ENCODE measurements at regions of chr19 and their contacts with region 1.

Region 1: GRCh38 chr19:51393959-51394836 is 3.8 kb upstream of the C19orf84 start:
- DNase-seq: peak; percentile 98
- H3K4me3 Mint-ChIP-seq: peak overlapping the region; percentile 86
- H3K27ac Mint-ChIP-seq: peak overlapping the region; percentile 98
- H3K4me1 Mint-ChIP-seq: peaks cover 54% of the 10 kb centered on the region
- H3K27me3 Mint-ChIP-seq: no peaks in the 10 kb centered on the region

Region 2: DNA sequence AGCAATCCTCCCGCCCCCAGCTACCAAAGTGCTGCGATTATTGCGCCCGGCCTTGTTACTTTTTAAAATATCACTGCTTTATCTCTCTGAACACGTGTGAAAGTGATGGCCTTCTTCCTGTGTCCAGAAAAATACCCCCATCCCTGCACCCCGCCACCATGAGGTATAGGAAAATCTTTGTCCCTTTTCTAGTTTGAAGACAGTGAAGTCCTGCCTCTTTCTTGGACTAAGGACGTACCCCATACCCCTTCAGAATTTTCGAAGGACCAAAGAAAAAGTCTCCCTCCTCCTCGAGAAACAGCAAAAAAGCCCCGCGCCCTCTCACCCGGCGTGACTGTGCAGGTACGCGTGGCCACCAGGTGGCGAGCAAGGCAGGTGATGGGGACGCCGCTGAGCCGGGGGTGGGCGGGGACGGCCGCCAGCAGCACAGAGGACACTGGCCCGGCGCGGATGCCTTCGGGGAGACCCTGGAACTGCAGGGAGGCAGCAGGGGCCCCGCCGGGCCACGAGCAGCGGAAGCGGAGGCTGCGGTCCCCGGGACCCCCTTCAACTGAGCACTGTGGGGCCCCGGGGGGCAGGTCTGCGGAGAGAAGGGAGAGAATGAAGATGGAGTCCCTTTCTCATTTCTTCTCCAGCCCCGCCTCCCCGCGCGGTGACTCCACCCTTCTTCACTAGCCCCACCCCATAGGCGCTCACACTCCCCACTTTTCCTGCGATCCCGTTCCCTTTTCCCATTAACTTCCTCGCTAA is 55.5 kb before region 1 on chr19:
- CTCF ChIA-PET with region 1: interaction called, 33 read pairs
- POLR2A ChIA-PET with region 1: interaction called, 37 read pairs
- DNase-seq: peak; percentile 90
- H3K4me3 Mint-ChIP-seq: peak overlapping the region; percentile 89
- H3K27ac Mint-ChIP-seq: peak overlapping the region; percentile 76
- H3K4me1 Mint-ChIP-seq: peaks cover 12% of the 10 kb centered on the region
- H3K27me3 Mint-ChIP-seq: peaks cover 9% of the 10 kb centered on the region

Region 3: GRCh38 chr19:51367565-51368365 is 26.4 kb before region 1 on chr19:
- CTCF ChIA-PET with region 1: interaction called, 16 read pairs
- POLR2A ChIA-PET with region 1: interaction called, 207 read pairs
- DNase-seq: peak; percentile 99
- H3K4me3 Mint-ChIP-seq: peak overlapping the region; percentile 95
- H3K27ac Mint-ChIP-seq: peak overlapping the region; percentile 100
- H3K4me1 Mint-ChIP-seq: peaks cover 76% of the 10 kb centered on the region
- H3K27me3 Mint-ChIP-seq: no peaks in the 10 kb centered on the region

Region 4: GRCh38 chr19:51380379-51380778 is 13.8 kb before region 1 on chr19:
- CTCF ChIA-PET with region 1: interaction called, 7 read pairs
- POLR2A ChIA-PET with region 1: interaction called, 21 read pairs
- DNase-seq: no peak
- H3K4me3 Mint-ChIP-seq: no peak overlapping the region
- H3K27ac Mint-ChIP-seq: peak overlapping the region; percentile 51
- H3K4me1 Mint-ChIP-seq: peaks cover 49% of the 10 kb centered on the region
- H3K27me3 Mint-ChIP-seq: no peaks in the 10 kb centered on the region

Region 5: DNA sequence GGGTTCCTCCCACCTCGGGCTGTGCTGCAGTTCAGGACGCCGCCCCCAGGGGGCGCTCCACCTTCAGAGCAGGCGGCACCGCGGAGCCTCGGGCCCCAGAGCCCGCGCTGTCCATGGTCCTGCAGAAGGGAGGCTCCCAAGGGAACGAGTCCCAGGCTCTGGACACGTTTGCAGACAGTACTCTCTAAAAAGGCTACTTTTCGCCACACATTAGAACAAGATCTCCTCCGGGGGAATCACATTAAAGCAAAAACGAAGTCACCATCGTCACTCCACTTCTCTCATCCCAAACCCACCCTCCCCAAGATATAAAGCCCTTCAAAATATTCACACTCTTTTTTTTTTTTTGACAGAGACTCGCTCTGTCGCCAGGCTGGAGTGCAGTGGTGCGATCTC is 27.9 kb after region 1 on chr19:
- CTCF ChIA-PET with region 1: interaction called, 10 read pairs
- POLR2A ChIA-PET with region 1: interaction called, 20 read pairs
- DNase-seq: peak; percentile 88
- H3K4me3 Mint-ChIP-seq: no peak overlapping the region
- H3K27ac Mint-ChIP-seq: no peak overlapping the region
- H3K4me1 Mint-ChIP-seq: peaks cover 9% of the 10 kb centered on the region
- H3K27me3 Mint-ChIP-seq: peaks cover 24% of the 10 kb centered on the region

Region 6: GRCh38 chr19:51480590-51480989 is 86.4 kb after region 1 on chr19:
- CTCF ChIA-PET with region 1: no interaction called
- POLR2A ChIA-PET with region 1: no interaction called
- DNase-seq: no peak
- H3K4me3 Mint-ChIP-seq: no peak overlapping the region
- H3K27ac Mint-ChIP-seq: no peak overlapping the region
- H3K4me1 Mint-ChIP-seq: no peaks in the 10 kb centered on the region
- H3K27me3 Mint-ChIP-seq: peaks cover 15% of the 10 kb centered on the region

Region 7: GRCh38 chr19:51681321-51682168 is 287.3 kb after region 1 on chr19:
- CTCF ChIA-PET with region 1: no interaction called
- POLR2A ChIA-PET with region 1: no interaction called
- DNase-seq: no peak
- H3K4me3 Mint-ChIP-seq: no peak overlapping the region
- H3K27ac Mint-ChIP-seq: no peak overlapping the region
- H3K4me1 Mint-ChIP-seq: peaks cover 5% of the 10 kb centered on the region
- H3K27me3 Mint-ChIP-seq: peaks cover 8% of the 10 kb centered on the region